ENCODE measurements at regions of chr4 and their contacts with region 1.

Region 1: DNA sequence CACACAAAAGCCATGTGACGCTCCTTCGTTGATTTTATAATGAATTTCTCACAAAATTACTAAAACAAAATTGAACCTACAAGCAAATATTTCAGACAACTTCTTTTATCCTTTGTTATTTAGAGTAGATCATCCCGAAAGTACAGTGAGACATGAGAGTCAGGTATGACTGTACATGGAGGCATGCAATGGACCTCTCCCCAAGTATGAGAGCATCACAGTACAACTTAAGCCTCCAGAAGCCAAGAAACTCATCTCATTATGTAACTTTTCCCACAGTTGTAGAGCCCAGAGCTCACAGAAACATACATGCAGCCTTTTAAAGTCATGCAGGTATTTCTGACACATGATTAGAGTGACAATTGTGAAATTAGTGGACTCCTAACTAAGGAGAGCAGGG is 167.7 kb downstream of the PAPSS1 start:
- DNase-seq: no peak
- ATAC-seq: no peak
- H3K4me3 ChIP-seq: no peak overlapping the region
- H3K4me3 Mint-ChIP-seq: no peak overlapping the region
- H3K27ac ChIP-seq: no peak overlapping the region
- H3K27ac Mint-ChIP-seq: no peak overlapping the region
- H3K4me1 ChIP-seq: no peaks in the 10 kb centered on the region
- H3K4me1 Mint-ChIP-seq: no peaks in the 10 kb centered on the region
- H3K27me3 ChIP-seq: no peaks in the 10 kb centered on the region
- H3K27me3 Mint-ChIP-seq: no peaks in the 10 kb centered on the region
- CTCF ChIP-seq: no peak

Region 2: GRCh38 chr4:107586321-107586720 is 34.0 kb after region 1 on chr4:
- CTCF ChIA-PET with region 1: no interaction called
- POLR2A ChIA-PET with region 1: no interaction called
- intact Hi-C with region 1: loop called in 1 of 2 experiments (anchors 5 kb)
- DNase-seq: no peak
- ATAC-seq: no peak
- H3K4me3 ChIP-seq: no peak overlapping the region
- H3K4me3 Mint-ChIP-seq: no peak overlapping the region
- H3K27ac ChIP-seq: no peak overlapping the region
- H3K27ac Mint-ChIP-seq: no peak overlapping the region
- H3K4me1 ChIP-seq: no peaks in the 10 kb centered on the region
- H3K4me1 Mint-ChIP-seq: no peaks in the 10 kb centered on the region
- H3K27me3 ChIP-seq: no peaks in the 10 kb centered on the region
- H3K27me3 Mint-ChIP-seq: peaks cover under 1% of the 10 kb centered on the region
- CTCF ChIP-seq: no peak

Measured in CD4-positive, alpha-beta T cell (primary cell).